Psoas muscle (tissue), 8 donors: ENCODE measurements at regions of chr21 and their contacts with region 1.

Region 1: DNA sequence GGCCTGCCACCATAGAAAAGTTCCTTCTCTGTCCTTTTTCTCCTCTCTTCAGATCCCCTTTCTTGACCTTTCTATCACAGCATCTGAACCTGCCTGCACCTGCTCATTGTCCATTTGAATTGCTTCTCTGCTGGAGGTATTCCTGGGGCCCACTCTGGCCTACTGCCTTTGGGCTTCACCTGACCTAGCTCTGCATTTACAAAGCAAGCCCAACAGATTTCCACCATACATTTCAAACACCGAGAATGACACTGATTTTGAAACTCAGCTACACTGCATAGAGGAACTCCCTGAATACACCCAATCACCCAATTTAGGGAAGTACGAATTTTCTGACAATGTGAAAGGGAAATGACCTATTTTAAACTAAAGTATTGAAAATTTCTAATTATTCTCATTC is 284.5 kb upstream of the USP25 start:
- DNase-seq: no peak
- ATAC-seq: no peak
- H3K4me3 ChIP-seq: no peak overlapping the region
- H3K27ac ChIP-seq: peak overlapping the region; percentile 74
- H3K4me1 ChIP-seq: peaks cover 43% of the 10 kb centered on the region
- H3K27me3 ChIP-seq: no peaks in the 10 kb centered on the region
- CTCF ChIP-seq: no peak

Region 2: DNA sequence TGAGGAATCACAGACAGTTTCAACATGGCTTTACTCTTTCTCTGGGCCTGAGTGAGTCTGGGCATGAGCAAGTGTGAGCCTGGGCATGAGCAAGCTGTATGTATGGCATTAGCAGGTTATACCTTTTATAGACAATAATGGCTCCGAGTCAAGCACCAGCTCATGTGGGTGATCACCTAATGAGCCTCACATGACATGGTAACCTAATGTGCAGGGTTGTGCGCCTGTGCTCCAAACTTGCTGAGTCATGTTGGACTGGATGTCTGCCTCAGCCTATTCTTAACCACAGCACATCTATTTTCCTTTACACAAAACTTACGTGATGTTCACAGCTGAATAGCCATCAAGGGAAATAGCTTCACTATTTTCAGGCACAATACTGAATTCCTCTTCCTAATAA is 144.3 kb before region 1 on chr21:
- intact Hi-C with region 1: loop called in 1 of 2 experiments (anchors 10 kb)
- DNase-seq: no peak
- ATAC-seq: peak; percentile 59 to 92 (median 88)
- H3K4me3 ChIP-seq: no peak overlapping the region
- H3K27ac ChIP-seq: peak overlapping the region; percentile 47
- H3K4me1 ChIP-seq: peaks cover 18% of the 10 kb centered on the region
- H3K27me3 ChIP-seq: no peaks in the 10 kb centered on the region
- CTCF ChIP-seq: no peak

Region 3: GRCh38 chr21:15614766-15615165 is 169.4 kb after region 1 on chr21:
- intact Hi-C with region 1: no loop called
- DNase-seq: no peak
- ATAC-seq: no peak
- H3K4me3 ChIP-seq: no peak overlapping the region
- H3K27ac ChIP-seq: no peak overlapping the region
- H3K4me1 ChIP-seq: no peaks in the 10 kb centered on the region
- H3K27me3 ChIP-seq: no peaks in the 10 kb centered on the region
- CTCF ChIP-seq: no peak